Breast epithelium (tissue), 4 donors: ENCODE measurements at regions of chr11 and their contacts with region 1.

Region 1: DNA sequence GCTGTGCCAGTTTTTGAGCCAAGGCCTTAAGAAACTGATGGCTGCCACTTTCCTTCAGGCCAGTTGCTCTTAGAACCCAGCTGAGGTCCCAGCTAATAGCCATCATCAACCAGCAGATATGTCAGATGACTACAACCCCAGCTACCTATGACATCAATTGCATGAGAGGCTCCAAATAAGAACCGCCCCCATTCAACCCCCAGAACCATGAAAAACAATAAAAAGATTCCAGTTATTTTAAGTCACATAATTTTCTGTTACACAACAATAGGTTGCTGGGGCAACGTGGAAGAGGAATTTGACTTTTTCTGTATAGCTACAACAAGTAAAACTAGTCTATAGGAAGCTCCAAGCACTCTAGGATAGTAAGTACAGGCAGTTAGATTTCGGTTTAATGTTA is 216.3 kb upstream of the MTNR1B start:
- DNase-seq: no peak
- H3K4me3 ChIP-seq: no peak overlapping the region
- H3K27ac ChIP-seq: no peak overlapping the region
- H3K4me1 ChIP-seq: no peaks in the 10 kb centered on the region
- H3K27me3 ChIP-seq: no peaks in the 10 kb centered on the region
- CTCF ChIP-seq: no peak
- POLR2A ChIP-seq: no peak

Region 2: GRCh38 chr11:91653079-91653754 is 1099.9 kb before region 1 on chr11:
- intact Hi-C with region 1: loop called (anchors 5 kb)
- DNase-seq: no peak
- H3K4me3 ChIP-seq: no peak overlapping the region
- H3K27ac ChIP-seq: no peak overlapping the region
- H3K4me1 ChIP-seq: no peaks in the 10 kb centered on the region
- H3K27me3 ChIP-seq: no peaks in the 10 kb centered on the region
- CTCF ChIP-seq: no peak
- POLR2A ChIP-seq: no peak

Region 3: DNA sequence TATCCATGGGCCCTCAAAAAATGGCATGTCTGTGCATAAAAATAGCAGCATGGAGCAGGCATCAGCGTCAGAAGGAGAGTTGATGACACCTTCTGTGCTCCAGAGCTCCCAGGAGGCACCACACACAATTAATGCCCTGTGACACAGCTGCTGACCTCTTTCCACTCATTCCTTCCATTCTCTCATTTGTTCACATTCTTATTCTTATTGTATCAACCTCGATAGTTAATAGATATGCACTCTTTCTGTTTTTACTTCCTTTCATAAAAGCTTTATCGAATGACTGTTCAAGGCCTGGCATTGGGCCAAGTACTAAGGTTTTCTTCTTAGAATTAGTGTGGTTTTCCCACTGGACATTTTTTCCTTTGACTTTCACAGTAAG is 49.7 kb before region 1 on chr11:
- intact Hi-C with region 1: loop called (anchors 2 kb)
- DNase-seq: no peak
- H3K4me3 ChIP-seq: no peak overlapping the region
- H3K27ac ChIP-seq: no peak overlapping the region
- H3K4me1 ChIP-seq: no peaks in the 10 kb centered on the region
- H3K27me3 ChIP-seq: no peaks in the 10 kb centered on the region
- CTCF ChIP-seq: no peak
- POLR2A ChIP-seq: no peak

Region 4: DNA sequence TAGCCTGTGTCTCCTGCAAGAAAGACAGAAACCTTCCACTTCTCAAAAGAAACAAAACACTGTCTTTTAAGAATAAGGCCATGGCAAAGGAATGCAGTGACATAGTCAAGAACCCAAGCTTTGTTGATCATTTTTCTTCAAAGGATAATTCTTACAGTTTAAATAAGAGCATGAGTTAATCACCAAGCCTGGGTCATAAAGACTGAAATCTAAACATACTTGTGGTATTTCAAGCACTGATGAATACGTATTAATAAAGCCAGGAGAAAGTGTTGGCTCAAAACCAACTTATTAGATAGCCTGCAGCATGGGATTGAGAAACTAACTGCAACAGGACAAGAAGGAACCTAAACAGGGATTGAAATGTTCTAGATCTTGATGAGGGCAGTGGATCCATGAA is 73.0 kb after region 1 on chr11:
- intact Hi-C with region 1: no loop called
- DNase-seq: no peak
- H3K4me3 ChIP-seq: no peak overlapping the region
- H3K27ac ChIP-seq: no peak overlapping the region
- H3K4me1 ChIP-seq: no peaks in the 10 kb centered on the region
- H3K27me3 ChIP-seq: no peaks in the 10 kb centered on the region
- CTCF ChIP-seq: no peak
- POLR2A ChIP-seq: no peak

Region 5: GRCh38 chr11:94120946-94121345 is 1367.8 kb after region 1 on chr11:
- intact Hi-C with region 1: no loop called
- DNase-seq: no peak
- H3K4me3 ChIP-seq: no peak overlapping the region
- H3K27ac ChIP-seq: no peak overlapping the region
- H3K4me1 ChIP-seq: no peaks in the 10 kb centered on the region
- H3K27me3 ChIP-seq: no peaks in the 10 kb centered on the region
- CTCF ChIP-seq: no peak
- POLR2A ChIP-seq: no peak